Naive thymus-derived CD4-positive, alpha-beta T cell (primary cell): ENCODE measurements at regions of chr17 and their contacts with region 1.

Region 1: GRCh38 chr17:27654654-27655524 is 23.9 kb downstream of the LGALS9 start:
- DNase-seq: peak; percentile 22 to 74 (median 45)
- ATAC-seq: peak; percentile 75
- H3K4me3 ChIP-seq: no peak overlapping the region
- H3K4me3 Mint-ChIP-seq: peak overlapping the region in 1 of 10 donors; percentile 0
- H3K27ac ChIP-seq: no peak overlapping the region
- H3K27ac Mint-ChIP-seq: peak overlapping the region in 1 of 9 donors; percentile 43
- H3K4me1 ChIP-seq: no peaks in the 10 kb centered on the region
- H3K4me1 Mint-ChIP-seq: peaks cover 3 to 10% (median 8%) of the 10 kb centered on the region in 7 donors
- H3K27me3 ChIP-seq: no peaks in the 10 kb centered on the region
- H3K27me3 Mint-ChIP-seq: peaks cover 0 to 13% (median 0%) of the 10 kb centered on the region in 5 donors

Region 2: GRCh38 chr17:27236717-27237315 is 418.1 kb before region 1 on chr17:
- CTCF ChIA-PET with region 1: interaction called, 9 read pairs
- POLR2A ChIA-PET with region 1: no interaction called
- intact Hi-C with region 1: loop called (anchors 1 to 2 kb)
- DNase-seq: peak; percentile 30 to 69 (median 58)
- ATAC-seq: peak; percentile 87
- H3K4me3 ChIP-seq: no peak overlapping the region
- H3K4me3 Mint-ChIP-seq: no peak overlapping the region
- H3K27ac ChIP-seq: no peak overlapping the region
- H3K27ac Mint-ChIP-seq: no peak overlapping the region
- H3K4me1 ChIP-seq: no peaks in the 10 kb centered on the region
- H3K4me1 Mint-ChIP-seq: peaks cover 0 to 19% (median 0%) of the 10 kb centered on the region in 7 donors
- H3K27me3 ChIP-seq: no peaks in the 10 kb centered on the region
- H3K27me3 Mint-ChIP-seq: peaks cover 0 to 19% (median 0%) of the 10 kb centered on the region in 5 donors

Region 3: GRCh38 chr17:27345141-27345904 is 309.6 kb before region 1 on chr17:
- CTCF ChIA-PET with region 1: no interaction called
- POLR2A ChIA-PET with region 1: no interaction called
- intact Hi-C with region 1: loop called in 1 of 2 experiments (anchors 5 kb)
- DNase-seq: no peak
- ATAC-seq: no peak
- H3K4me3 ChIP-seq: no peak overlapping the region
- H3K4me3 Mint-ChIP-seq: no peak overlapping the region
- H3K27ac ChIP-seq: no peak overlapping the region
- H3K27ac Mint-ChIP-seq: peak overlapping the region in 1 of 9 donors; percentile 84
- H3K4me1 ChIP-seq: peaks cover 5 to 7% of the 10 kb centered on the region in 2 donors
- H3K4me1 Mint-ChIP-seq: peaks cover 0 to 28% (median 10%) of the 10 kb centered on the region in 7 donors
- H3K27me3 ChIP-seq: no peaks in the 10 kb centered on the region
- H3K27me3 Mint-ChIP-seq: peaks cover 0 to 9% (median 0%) of the 10 kb centered on the region in 5 donors

Region 4: DNA sequence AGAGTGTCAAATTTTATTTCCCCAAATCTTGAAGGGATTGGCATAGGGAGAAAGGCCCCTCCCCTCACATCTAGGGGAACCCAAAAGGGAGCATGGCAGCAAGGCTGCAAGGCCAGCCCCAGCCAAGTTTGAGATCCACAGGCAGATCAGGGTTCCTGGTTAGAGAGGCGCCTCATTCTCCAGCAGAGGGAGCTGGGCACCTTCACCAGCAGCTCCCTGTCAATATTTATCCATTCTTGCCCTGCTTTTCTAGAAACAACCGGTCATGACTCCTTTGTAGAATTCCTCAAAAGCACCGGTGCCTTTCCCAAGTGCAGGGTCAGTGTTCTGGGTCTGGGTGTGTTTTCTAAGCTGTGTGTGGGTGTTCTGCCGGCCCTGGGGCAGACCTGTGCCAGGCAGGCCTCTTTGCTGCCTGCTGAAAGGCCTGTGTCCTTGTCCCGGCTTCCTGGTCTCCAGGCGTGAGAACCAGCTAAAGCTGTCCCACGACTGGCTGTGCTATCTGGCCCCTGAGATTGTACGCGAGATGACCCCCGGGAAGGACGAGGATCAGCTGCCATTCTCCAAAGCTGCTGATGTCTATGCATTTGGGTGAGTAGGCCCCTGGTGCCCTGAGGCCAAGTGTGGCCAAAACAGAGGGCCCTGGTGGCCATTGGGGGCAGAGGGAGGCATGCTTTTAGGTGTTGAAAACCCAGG is 45.1 kb before region 1 on chr17:
- CTCF ChIA-PET with region 1: interaction called, 50 read pairs
- POLR2A ChIA-PET with region 1: no interaction called
- intact Hi-C with region 1: loop called (anchors 1 kb)
- DNase-seq: peak in 3 of 9 donors; percentile 10 to 25 (median 22)
- ATAC-seq: no peak
- H3K4me3 ChIP-seq: no peak overlapping the region
- H3K4me3 Mint-ChIP-seq: no peak overlapping the region
- H3K27ac ChIP-seq: no peak overlapping the region
- H3K27ac Mint-ChIP-seq: no peak overlapping the region
- H3K4me1 ChIP-seq: no peaks in the 10 kb centered on the region
- H3K4me1 Mint-ChIP-seq: peaks cover 0 to 21% (median 0%) of the 10 kb centered on the region in 7 donors
- H3K27me3 ChIP-seq: no peaks in the 10 kb centered on the region
- H3K27me3 Mint-ChIP-seq: no peaks in the 10 kb centered on the region

Region 5: GRCh38 chr17:27879987-27880608 is 225.2 kb after region 1 on chr17:
- CTCF ChIA-PET with region 1: interaction called, 3 read pairs
- POLR2A ChIA-PET with region 1: no interaction called
- intact Hi-C with region 1: loop called in 1 of 2 experiments (anchors 2 kb)
- DNase-seq: peak; percentile 23 to 70 (median 54)
- ATAC-seq: peak; percentile 84
- H3K4me3 ChIP-seq: no peak overlapping the region
- H3K4me3 Mint-ChIP-seq: peak overlapping the region in 7 of 10 donors; percentile 14 to 77 (median 51)
- H3K27ac ChIP-seq: no peak overlapping the region
- H3K27ac Mint-ChIP-seq: peak overlapping the region in 3 of 9 donors; percentile 25 to 70 (median 62)
- H3K4me1 ChIP-seq: peaks cover 4 to 16% of the 10 kb centered on the region in 2 donors
- H3K4me1 Mint-ChIP-seq: peaks cover 19 to 37% (median 24%) of the 10 kb centered on the region in 7 donors
- H3K27me3 ChIP-seq: no peaks in the 10 kb centered on the region
- H3K27me3 Mint-ChIP-seq: no peaks in the 10 kb centered on the region